CD8-positive, alpha-beta T cell (primary cell): ENCODE measurements at regions of chrX and their contacts with region 1.

Region 1: DNA sequence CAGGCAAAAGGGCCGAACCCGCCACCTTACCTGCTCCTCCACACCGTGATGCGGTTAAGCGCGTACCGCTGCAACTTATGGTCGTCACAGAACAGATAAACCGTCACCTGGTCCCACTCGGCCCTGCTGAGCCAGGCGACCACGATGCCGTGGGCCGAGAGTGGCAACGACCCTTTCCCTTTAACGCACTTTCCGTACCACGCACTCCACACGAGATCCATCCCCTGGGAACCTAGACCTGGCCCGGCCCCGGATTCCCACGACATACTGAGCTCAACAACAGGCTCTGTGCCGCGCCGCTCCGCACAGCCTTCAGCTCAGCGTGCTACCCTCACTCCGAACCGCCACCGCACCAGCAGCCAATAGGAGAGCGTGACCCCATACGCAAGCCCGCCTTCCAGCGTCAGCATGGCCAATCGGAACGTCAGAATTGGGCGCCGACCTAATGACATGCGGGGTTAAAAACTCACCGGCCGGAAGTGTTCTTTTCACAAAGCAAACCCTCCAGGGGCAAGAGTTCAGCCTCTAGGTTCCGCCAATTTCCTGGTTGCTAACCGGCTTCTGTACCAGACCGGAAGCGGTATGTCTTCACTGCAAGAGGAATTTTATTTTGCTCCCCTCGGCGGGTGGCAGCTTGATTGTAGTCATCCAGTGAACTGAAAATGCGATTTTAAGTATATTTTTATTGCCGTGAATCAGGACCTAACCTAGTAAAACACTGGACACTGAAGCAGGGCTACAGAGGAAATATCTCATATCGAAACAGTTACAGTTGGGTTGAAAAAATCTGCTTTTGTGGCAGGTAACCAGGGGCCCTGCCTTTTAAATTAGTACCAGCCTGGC is at the start of gene LAS1L:
- DNase-seq: peak; percentile 77 to 95 (median 87)
- ATAC-seq: peak; percentile 99
- H3K4me3 ChIP-seq: peak within 1 kb of the TSS; percentile 61 to 84
- H3K4me3 Mint-ChIP-seq: peak within 1 kb of the TSS; percentile 100
- H3K27ac ChIP-seq: peak within 1 kb of the TSS; percentile 71 to 77
- H3K27ac Mint-ChIP-seq: peak within 1 kb of the TSS; percentile 98
- H3K4me1 ChIP-seq: peaks cover 15% of the 10 kb centered on the region
- H3K4me1 Mint-ChIP-seq: peaks cover 22% of the 10 kb centered on the region
- H3K27me3 ChIP-seq: no peaks in the 10 kb centered on the region
- H3K27me3 Mint-ChIP-seq: no peaks in the 10 kb centered on the region
- CTCF ChIP-seq: no peak
- total RNA-seq, gene LAS1L: 52.7 to 55.3 TPM

Region 2: DNA sequence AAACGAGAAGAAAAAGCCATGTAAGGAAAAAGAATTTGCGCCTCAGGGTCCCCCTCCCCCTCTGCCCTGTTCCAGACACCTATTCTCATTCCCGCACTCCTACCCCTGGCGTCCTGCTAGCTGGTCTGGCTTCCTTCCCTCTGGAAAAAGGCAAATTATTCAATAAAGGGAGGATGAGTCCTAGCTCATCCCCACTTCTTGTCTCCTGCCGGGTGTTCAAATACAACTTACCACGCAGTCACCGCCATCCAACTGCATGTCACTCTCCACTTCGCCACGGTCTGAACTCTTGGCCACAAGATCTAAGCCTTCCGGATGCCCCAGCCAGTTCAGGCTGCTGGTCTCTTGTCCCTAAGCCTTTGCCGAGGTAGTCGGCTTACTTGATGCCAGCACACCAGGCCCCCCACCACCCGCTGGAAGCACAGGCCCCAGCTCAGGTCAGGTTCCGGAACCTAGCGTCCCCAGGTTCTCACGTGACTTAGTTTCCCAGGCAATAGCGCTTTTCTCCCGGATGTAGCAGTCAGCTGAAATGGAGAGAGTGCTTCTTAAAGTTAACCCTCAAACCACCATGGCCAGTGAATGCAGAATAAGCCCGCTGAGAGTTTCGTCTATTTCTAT is 1974.0 kb before region 1 on chrX:
- CTCF ChIA-PET with region 1: no interaction called
- POLR2A ChIA-PET with region 1: no interaction called
- intact Hi-C with region 1: loop called (anchors 5 to 10 kb)
- DNase-seq: peak; percentile 3 to 78 (median 53)
- ATAC-seq: peak; percentile 86
- H3K4me3 ChIP-seq: peak overlapping the region; percentile 71 to 93
- H3K4me3 Mint-ChIP-seq: peak overlapping the region; percentile 93
- H3K27ac ChIP-seq: peak overlapping the region; percentile 69 to 76
- H3K27ac Mint-ChIP-seq: peak overlapping the region; percentile 93
- H3K4me1 ChIP-seq: peaks cover 14% of the 10 kb centered on the region
- H3K4me1 Mint-ChIP-seq: peaks cover 37% of the 10 kb centered on the region
- H3K27me3 ChIP-seq: no peaks in the 10 kb centered on the region
- H3K27me3 Mint-ChIP-seq: no peaks in the 10 kb centered on the region
- CTCF ChIP-seq: no peak

Region 3: GRCh38 chrX:64205735-64206491 is 1328.8 kb before region 1 on chrX:
- CTCF ChIA-PET with region 1: no interaction called
- POLR2A ChIA-PET with region 1: interaction called, 3 read pairs
- intact Hi-C with region 1: loop called (anchors 2 to 5 kb)
- DNase-seq: peak; percentile 67 to 92 (median 86)
- ATAC-seq: peak; percentile 88
- H3K4me3 ChIP-seq: peak overlapping the region; percentile 57 to 82
- H3K4me3 Mint-ChIP-seq: peak overlapping the region; percentile 92
- H3K27ac ChIP-seq: peak overlapping the region; percentile 77 to 90
- H3K27ac Mint-ChIP-seq: peak overlapping the region; percentile 93
- H3K4me1 ChIP-seq: peaks cover 11% of the 10 kb centered on the region
- H3K4me1 Mint-ChIP-seq: peaks cover 23% of the 10 kb centered on the region
- H3K27me3 ChIP-seq: no peaks in the 10 kb centered on the region
- H3K27me3 Mint-ChIP-seq: no peaks in the 10 kb centered on the region
- CTCF ChIP-seq: no peak

Region 4: GRCh38 chrX:64975989-64976672 is 558.5 kb before region 1 on chrX and contains the start of gene ZC4H2:
- CTCF ChIA-PET with region 1: no interaction called
- POLR2A ChIA-PET with region 1: no interaction called
- intact Hi-C with region 1: loop called (anchors 1 kb)
- DNase-seq: peak; percentile 31 to 81 (median 65)
- ATAC-seq: peak; percentile 95
- H3K4me3 ChIP-seq: peak within 1 kb of the TSS; percentile 60 to 81
- H3K4me3 Mint-ChIP-seq: peak within 1 kb of the TSS; percentile 95
- H3K27ac ChIP-seq: peak within 1 kb of the TSS; percentile 31 to 37
- H3K27ac Mint-ChIP-seq: peak within 1 kb of the TSS; percentile 91
- H3K4me1 ChIP-seq: peaks cover 10% of the 10 kb centered on the region
- H3K4me1 Mint-ChIP-seq: peaks cover 33% of the 10 kb centered on the region
- H3K27me3 ChIP-seq: no peaks in the 10 kb centered on the region
- H3K27me3 Mint-ChIP-seq: no peaks in the 10 kb centered on the region
- CTCF ChIP-seq: no peak
- total RNA-seq, gene ZC4H2: 3.2 to 6.5 TPM

Region 5: DNA sequence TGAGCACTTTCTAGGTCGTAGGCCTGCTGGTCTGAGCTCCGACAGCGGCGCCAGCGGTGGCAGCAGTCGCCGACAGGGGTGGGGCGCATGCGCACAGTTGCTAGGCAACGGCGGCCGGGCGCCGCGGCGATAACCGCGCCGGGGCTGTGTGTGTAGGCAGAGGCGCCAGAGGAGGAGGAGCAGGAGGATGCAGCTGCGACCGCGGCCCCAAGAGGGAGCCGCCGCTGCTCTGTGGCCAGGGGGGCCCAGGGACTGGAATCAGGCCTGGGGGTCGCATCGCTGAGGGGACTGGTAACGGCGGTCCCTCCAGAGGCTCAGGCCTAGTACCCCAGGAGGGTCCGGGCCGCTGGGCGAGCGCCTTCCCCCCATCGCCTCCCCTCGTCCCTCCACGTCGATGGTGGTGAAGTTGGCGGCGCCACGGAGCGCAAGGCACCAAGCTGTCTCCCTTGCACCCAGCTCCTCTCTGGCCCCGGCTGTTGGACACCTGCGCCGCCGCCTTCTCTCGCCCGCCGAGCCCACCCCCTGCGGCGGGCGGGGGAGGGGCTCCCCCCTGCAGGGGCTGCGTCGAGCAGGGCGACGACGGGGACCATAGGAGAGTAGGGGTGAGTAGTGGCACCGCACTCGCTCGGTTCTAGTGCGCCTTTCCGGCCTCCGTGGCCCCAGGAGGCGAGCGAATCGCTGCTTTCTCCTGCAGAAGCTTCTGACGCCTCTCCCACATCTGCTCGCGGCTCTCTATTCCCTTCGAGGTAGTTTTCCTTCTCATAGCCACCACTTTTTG is 499.8 kb before region 1 on chrX:
- CTCF ChIA-PET with region 1: no interaction called
- POLR2A ChIA-PET with region 1: no interaction called
- intact Hi-C with region 1: loop called (anchors 1 to 2 kb)
- DNase-seq: peak; percentile 59 to 89 (median 80)
- ATAC-seq: peak; percentile 85
- H3K4me3 ChIP-seq: peak within 1 kb of the TSS; percentile 64 to 66
- H3K4me3 Mint-ChIP-seq: peak within 1 kb of the TSS; percentile 94
- H3K27ac ChIP-seq: peak within 1 kb of the TSS; percentile 72 to 78
- H3K27ac Mint-ChIP-seq: peak within 1 kb of the TSS; percentile 96
- H3K4me1 ChIP-seq: peaks cover 10% of the 10 kb centered on the region
- H3K4me1 Mint-ChIP-seq: peaks cover 37% of the 10 kb centered on the region
- H3K27me3 ChIP-seq: no peaks in the 10 kb centered on the region
- H3K27me3 Mint-ChIP-seq: no peaks in the 10 kb centered on the region
- CTCF ChIP-seq: peak; percentile 46

Region 6: GRCh38 chrX:65677954-65678469 is 143.3 kb after region 1 on chrX:
- CTCF ChIA-PET with region 1: no interaction called
- POLR2A ChIA-PET with region 1: no interaction called
- intact Hi-C with region 1: loop called in 1 of 2 experiments (anchors 10 kb)
- DNase-seq: no peak
- ATAC-seq: no peak
- H3K4me3 ChIP-seq: no peak overlapping the region
- H3K4me3 Mint-ChIP-seq: peak overlapping the region; percentile 58
- H3K27ac ChIP-seq: peak overlapping the region in 1 of 2 experiments; percentile 54
- H3K27ac Mint-ChIP-seq: peak overlapping the region; percentile 77
- H3K4me1 ChIP-seq: peaks cover 85% of the 10 kb centered on the region
- H3K4me1 Mint-ChIP-seq: peaks cover 83% of the 10 kb centered on the region
- H3K27me3 ChIP-seq: no peaks in the 10 kb centered on the region
- H3K27me3 Mint-ChIP-seq: no peaks in the 10 kb centered on the region
- CTCF ChIP-seq: no peak

Region 7: GRCh38 chrX:66900886-66901285 is 1366.2 kb after region 1 on chrX:
- CTCF ChIA-PET with region 1: no interaction called
- POLR2A ChIA-PET with region 1: no interaction called
- intact Hi-C with region 1: no loop called
- DNase-seq: no peak
- ATAC-seq: no peak
- H3K4me3 ChIP-seq: no peak overlapping the region
- H3K4me3 Mint-ChIP-seq: no peak overlapping the region
- H3K27ac ChIP-seq: no peak overlapping the region
- H3K27ac Mint-ChIP-seq: no peak overlapping the region
- H3K4me1 ChIP-seq: no peaks in the 10 kb centered on the region
- H3K4me1 Mint-ChIP-seq: no peaks in the 10 kb centered on the region
- H3K27me3 ChIP-seq: no peaks in the 10 kb centered on the region
- H3K27me3 Mint-ChIP-seq: no peaks in the 10 kb centered on the region
- CTCF ChIP-seq: no peak